CD4-positive, alpha-beta T cell (primary cell): ENCODE measurements at regions of chr12 and their contacts with region 1.

Region 1: GRCh38 chr12:94207849-94208621 is 59.7 kb downstream of the PLXNC1 start:
- DNase-seq: peak in 10 of 14 experiments; percentile 1 to 78 (median 15)
- ATAC-seq: peak; percentile 80
- H3K4me3 ChIP-seq: peak overlapping the region; percentile 41
- H3K4me3 Mint-ChIP-seq: peak overlapping the region; percentile 74
- H3K27ac ChIP-seq: peak overlapping the region; percentile 71 to 83
- H3K27ac Mint-ChIP-seq: peak overlapping the region; percentile 97
- H3K4me1 ChIP-seq: peaks cover 36% of the 10 kb centered on the region
- H3K4me1 Mint-ChIP-seq: peaks cover 53% of the 10 kb centered on the region
- H3K27me3 ChIP-seq: no peaks in the 10 kb centered on the region
- H3K27me3 Mint-ChIP-seq: no peaks in the 10 kb centered on the region
- CTCF ChIP-seq: no peak

Region 2: GRCh38 chr12:94244165-94245133 is 36.4 kb after region 1 on chr12:
- CTCF ChIA-PET with region 1: no interaction called
- POLR2A ChIA-PET with region 1: no interaction called
- intact Hi-C with region 1: loop called in 1 of 2 experiments (anchors 5 kb)
- DNase-seq: peak in 7 of 14 experiments; percentile 6 to 72 (median 38)
- ATAC-seq: peak; percentile 41
- H3K4me3 ChIP-seq: no peak overlapping the region
- H3K4me3 Mint-ChIP-seq: no peak overlapping the region
- H3K27ac ChIP-seq: peak overlapping the region in 1 of 2 donors; percentile 0
- H3K27ac Mint-ChIP-seq: no peak overlapping the region
- H3K4me1 ChIP-seq: peaks cover 20% of the 10 kb centered on the region
- H3K4me1 Mint-ChIP-seq: peaks cover 17% of the 10 kb centered on the region
- H3K27me3 ChIP-seq: no peaks in the 10 kb centered on the region
- H3K27me3 Mint-ChIP-seq: no peaks in the 10 kb centered on the region
- CTCF ChIP-seq: no peak

Region 3: GRCh38 chr12:94255006-94255405 is 47.0 kb after region 1 on chr12:
- CTCF ChIA-PET with region 1: no interaction called
- POLR2A ChIA-PET with region 1: no interaction called
- intact Hi-C with region 1: loop called in 1 of 2 experiments (anchors 1 kb)
- DNase-seq: no peak
- ATAC-seq: no peak
- H3K4me3 ChIP-seq: no peak overlapping the region
- H3K4me3 Mint-ChIP-seq: no peak overlapping the region
- H3K27ac ChIP-seq: no peak overlapping the region
- H3K27ac Mint-ChIP-seq: no peak overlapping the region
- H3K4me1 ChIP-seq: no peaks in the 10 kb centered on the region
- H3K4me1 Mint-ChIP-seq: no peaks in the 10 kb centered on the region
- H3K27me3 ChIP-seq: no peaks in the 10 kb centered on the region
- H3K27me3 Mint-ChIP-seq: no peaks in the 10 kb centered on the region
- CTCF ChIP-seq: no peak

Region 4: GRCh38 chr12:94269316-94269999 is 61.4 kb after region 1 on chr12:
- CTCF ChIA-PET with region 1: no interaction called
- POLR2A ChIA-PET with region 1: no interaction called
- intact Hi-C with region 1: no loop called
- DNase-seq: no peak
- ATAC-seq: no peak
- H3K4me3 ChIP-seq: no peak overlapping the region
- H3K4me3 Mint-ChIP-seq: no peak overlapping the region
- H3K27ac ChIP-seq: no peak overlapping the region
- H3K27ac Mint-ChIP-seq: no peak overlapping the region
- H3K4me1 ChIP-seq: peaks cover 17% of the 10 kb centered on the region
- H3K4me1 Mint-ChIP-seq: peaks cover 46% of the 10 kb centered on the region
- H3K27me3 ChIP-seq: no peaks in the 10 kb centered on the region
- H3K27me3 Mint-ChIP-seq: no peaks in the 10 kb centered on the region
- CTCF ChIP-seq: no peak